Left cardiac atrium (tissue), 4 donors: ENCODE measurements at regions of chr3 and their contacts with region 1.

Region 1: GRCh38 chr3:107064445-107065060 is 312.7 kb upstream of the CCDC54 start:
- DNase-seq: peak; percentile 36
- ATAC-seq: peak; percentile 91 to 92

Region 2: GRCh38 chr3:106161246-106161645 is 903.3 kb before region 1 on chr3:
- intact Hi-C with region 1: no loop called
- DNase-seq: no peak
- ATAC-seq: no peak

Region 3: DNA sequence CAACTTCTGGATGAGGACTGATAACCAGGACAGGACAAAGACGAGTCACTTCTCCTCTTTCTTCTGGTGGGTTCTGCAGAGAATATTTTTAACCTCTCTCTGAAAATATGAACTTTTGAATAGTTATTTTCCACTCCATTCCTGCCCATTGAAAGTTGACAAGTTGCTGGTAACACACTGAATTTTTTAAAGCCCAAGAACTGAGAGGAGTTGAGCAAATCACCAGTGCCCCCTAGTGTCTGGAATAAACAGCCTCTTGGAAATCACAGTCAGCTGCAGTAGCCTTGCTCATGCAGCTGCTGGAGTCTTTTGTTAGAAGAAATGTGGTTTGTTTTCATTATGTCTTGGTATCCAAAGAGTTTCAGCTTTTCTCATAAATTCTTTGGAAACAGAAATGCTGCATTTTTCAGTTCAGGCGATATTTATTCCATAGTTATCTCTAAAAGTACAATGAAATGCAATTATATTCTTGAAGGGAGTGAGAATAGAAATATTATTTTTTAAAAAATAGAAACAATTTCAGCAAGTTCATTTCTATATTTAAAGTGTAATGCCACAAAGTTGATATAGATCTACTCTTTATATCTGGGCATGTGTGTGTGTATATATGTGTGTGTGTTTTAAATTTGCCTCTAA is 454.8 kb before region 1 on chr3:
- intact Hi-C with region 1: loop called in 1 of 2 experiments (anchors 10 kb)
- DNase-seq: peak; percentile 24
- ATAC-seq: peak; percentile 85 to 89

Region 4: GRCh38 chr3:106797461-106797860 is 267.1 kb before region 1 on chr3:
- intact Hi-C with region 1: no loop called
- DNase-seq: no peak
- ATAC-seq: no peak

Region 5: DNA sequence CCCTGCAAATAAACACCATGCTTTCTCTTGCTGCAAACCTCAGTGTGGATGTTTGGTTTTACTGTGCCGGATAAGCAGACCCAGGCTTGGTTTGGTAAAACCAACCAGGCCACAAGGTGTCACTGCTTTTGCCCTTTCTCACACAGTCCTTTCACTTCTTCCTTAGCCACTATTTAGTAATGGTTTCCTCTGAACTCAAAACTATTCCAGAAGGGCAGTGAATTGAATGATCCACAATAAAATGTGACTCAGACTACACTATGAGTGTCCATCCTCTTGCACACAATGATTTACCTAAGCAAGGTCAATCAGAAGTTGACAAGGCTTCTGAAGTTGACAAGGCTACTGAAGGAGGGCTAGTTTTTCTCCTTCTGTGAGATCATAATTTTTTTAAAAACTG is 239.7 kb before region 1 on chr3:
- intact Hi-C with region 1: loop called (anchors 1 to 5 kb)
- DNase-seq: no peak
- ATAC-seq: peak; percentile 73 to 79

Region 6: GRCh38 chr3:106839576-106840280 is 224.8 kb before region 1 on chr3:
- intact Hi-C with region 1: no loop called
- DNase-seq: no peak
- ATAC-seq: peak; percentile 74 to 75